Activated CD4-positive, alpha-beta memory T cell treated with anti-CD3 and anti-CD28 coated beads, Interleukin-2, amount 10 ng/mL, durations not matched to agents 7 days and 5 days (primary cell): ENCODE measurements at regions of chr14 and their contacts with region 1.

Region 1: DNA sequence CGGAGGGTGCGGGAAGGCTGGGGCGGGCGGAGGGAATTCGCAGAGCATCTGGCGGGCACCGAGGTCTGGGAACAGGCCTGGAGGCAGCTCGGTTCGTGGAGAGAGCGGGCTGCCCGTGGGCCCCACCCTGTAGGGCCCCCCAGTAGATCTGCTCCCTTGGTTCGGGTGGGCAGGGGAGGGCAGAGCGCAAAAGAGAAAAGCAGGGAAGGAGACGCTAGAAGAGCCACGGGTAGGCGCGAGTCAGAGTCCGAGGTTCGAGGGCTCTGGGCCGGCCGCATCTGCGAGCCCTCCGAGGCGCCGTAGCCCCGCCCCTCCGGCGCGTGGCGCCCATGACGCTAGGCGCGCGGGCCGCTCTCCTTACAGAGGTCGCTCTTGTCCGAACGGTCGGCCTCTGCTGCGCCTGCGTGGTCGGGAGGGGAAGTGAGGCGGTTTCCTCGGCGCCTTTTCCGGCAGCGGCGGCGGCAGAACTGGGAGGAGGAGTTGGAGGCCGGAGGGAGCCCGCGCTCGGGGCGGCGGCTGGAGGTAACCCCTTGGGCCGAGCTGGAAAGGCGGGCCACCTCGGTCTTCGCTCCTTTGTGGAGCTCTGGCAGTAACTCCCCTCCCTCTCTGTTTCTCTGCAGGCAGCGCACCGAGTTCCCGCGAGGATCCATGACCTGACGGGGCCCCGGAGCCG is at the start of gene ARF6:
- DNase-seq: peak; percentile 98
- H3K4me3 Mint-ChIP-seq: peak within 1 kb of the TSS; percentile 96
- H3K27ac Mint-ChIP-seq: peak within 1 kb of the TSS; percentile 100
- H3K4me1 Mint-ChIP-seq: peaks cover 20% of the 10 kb centered on the region
- H3K27me3 Mint-ChIP-seq: no peaks in the 10 kb centered on the region
- total RNA-seq, gene ARF6: 198 to 199 TPM

Region 2: GRCh38 chr14:49620182-49621113 is 272.3 kb before region 1 on chr14 and contains the starts of genes MGAT2 and RPL36AL:
- CTCF ChIA-PET with region 1: no interaction called
- POLR2A ChIA-PET with region 1: interaction called, 10 read pairs
- DNase-seq: peak; percentile 96
- H3K4me3 Mint-ChIP-seq: peak within 1 kb of the TSS; percentile 94
- H3K27ac Mint-ChIP-seq: peak within 1 kb of the TSS; percentile 94
- H3K4me1 Mint-ChIP-seq: peaks cover 50% of the 10 kb centered on the region
- H3K27me3 Mint-ChIP-seq: no peaks in the 10 kb centered on the region
- total RNA-seq, gene MGAT2: 82.7 to 86.5 TPM
- total RNA-seq, gene RPL36AL: 320 to 330 TPM

Region 3: DNA sequence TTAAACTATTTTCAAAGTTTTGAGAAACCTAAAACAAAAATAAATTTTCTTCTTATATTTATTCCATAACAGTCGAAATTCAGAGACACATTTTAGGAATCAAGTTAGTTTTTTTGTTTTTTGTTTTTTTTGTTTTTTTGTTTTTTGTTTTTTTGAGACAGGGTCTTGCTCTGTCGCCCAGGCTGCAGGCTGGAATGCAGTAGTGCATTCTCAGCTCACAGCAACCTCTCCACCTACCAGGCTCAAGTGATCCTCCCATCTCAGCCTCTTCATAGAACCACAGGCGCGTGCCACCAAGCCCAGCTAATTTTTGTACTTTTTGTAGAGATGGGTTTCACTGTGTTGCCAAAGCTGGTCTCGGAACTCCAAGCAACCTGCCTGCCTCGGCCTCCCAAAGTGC is 239.3 kb before region 1 on chr14:
- CTCF ChIA-PET with region 1: no interaction called
- POLR2A ChIA-PET with region 1: no interaction called
- DNase-seq: no peak
- H3K4me3 Mint-ChIP-seq: no peak overlapping the region
- H3K27ac Mint-ChIP-seq: no peak overlapping the region
- H3K4me1 Mint-ChIP-seq: no peaks in the 10 kb centered on the region
- H3K27me3 Mint-ChIP-seq: no peaks in the 10 kb centered on the region

Region 4: DNA sequence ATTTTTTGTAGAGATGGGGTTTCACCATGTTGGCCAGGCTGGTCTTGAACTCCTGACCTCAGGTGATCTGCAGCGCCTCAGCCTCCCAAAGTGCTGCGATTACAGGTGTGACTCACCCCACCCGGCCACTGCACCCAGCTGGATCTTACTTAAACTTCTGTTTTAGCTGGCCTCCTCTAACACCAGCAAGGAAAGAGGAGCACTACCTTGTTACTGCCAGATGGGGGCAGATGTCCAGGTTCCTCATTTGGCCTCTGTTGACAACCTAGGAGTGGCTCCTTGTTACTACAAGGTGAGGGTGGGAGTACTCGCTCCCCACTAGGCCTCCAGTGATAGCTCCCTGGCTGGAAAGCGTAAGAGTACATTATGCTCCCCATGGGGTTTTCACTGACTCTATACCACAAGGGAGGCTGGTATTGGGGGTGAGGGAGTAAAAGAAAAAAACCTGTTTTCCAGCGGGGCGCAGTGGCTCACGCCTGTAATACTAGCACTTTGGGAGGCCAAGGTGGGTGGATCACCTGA is 13.0 kb before region 1 on chr14:
- CTCF ChIA-PET with region 1: interaction called, 30 read pairs
- POLR2A ChIA-PET with region 1: interaction called, 51 read pairs
- DNase-seq: peak; percentile 76
- H3K4me3 Mint-ChIP-seq: no peak overlapping the region
- H3K27ac Mint-ChIP-seq: peak overlapping the region; percentile 50
- H3K4me1 Mint-ChIP-seq: peaks cover 48% of the 10 kb centered on the region
- H3K27me3 Mint-ChIP-seq: no peaks in the 10 kb centered on the region

Region 5: GRCh38 chr14:49940808-49941421 is 48.1 kb after region 1 on chr14:
- CTCF ChIA-PET with region 1: no interaction called
- POLR2A ChIA-PET with region 1: interaction called, 14 read pairs
- DNase-seq: peak; percentile 30
- H3K4me3 Mint-ChIP-seq: no peak overlapping the region
- H3K27ac Mint-ChIP-seq: peak overlapping the region; percentile 63
- H3K4me1 Mint-ChIP-seq: peaks cover 68% of the 10 kb centered on the region
- H3K27me3 Mint-ChIP-seq: no peaks in the 10 kb centered on the region

Region 6: GRCh38 chr14:50038398-50039119 is 145.8 kb after region 1 on chr14:
- CTCF ChIA-PET with region 1: no interaction called
- POLR2A ChIA-PET with region 1: interaction called, 38 read pairs
- DNase-seq: peak; percentile 70
- H3K4me3 Mint-ChIP-seq: peak overlapping the region; percentile 79
- H3K27ac Mint-ChIP-seq: peak overlapping the region; percentile 98
- H3K4me1 Mint-ChIP-seq: peaks cover 83% of the 10 kb centered on the region
- H3K27me3 Mint-ChIP-seq: no peaks in the 10 kb centered on the region

Region 7: DNA sequence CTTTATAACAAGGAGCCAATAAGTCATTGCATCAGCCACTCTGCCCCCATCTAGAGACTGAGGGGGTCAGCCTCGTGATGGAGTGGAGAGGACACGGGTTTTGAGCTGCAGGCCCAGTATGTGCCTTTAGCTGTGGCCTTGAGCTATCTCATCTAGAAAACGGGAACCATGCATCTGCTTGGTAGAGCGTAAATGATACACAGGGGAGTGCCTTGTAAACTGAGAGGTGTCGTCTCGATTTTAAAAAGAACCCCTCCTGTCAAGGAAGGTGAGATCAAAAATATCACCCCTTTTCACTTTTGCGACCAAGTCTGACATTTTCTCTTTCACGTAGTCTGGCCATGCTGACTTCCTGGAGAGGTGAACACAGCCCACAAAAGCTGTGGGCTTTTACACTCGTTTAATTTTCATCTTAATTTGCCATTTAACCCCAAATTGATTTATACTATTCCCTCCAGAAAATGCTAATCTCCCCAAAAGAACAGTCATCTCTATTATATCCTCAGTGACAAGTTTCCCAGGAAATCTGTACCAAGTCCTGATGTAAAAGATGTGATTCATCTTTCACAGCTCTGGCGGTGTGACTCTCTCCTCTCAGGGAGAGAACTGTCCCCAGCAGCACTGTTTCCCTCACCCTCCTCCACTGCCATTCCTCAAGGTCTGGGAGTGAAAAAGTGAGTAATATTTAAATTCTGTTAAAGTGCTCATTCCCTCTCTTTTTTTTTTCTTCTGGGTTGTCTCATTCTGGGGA is 193.0 kb after region 1 on chr14:
- CTCF ChIA-PET with region 1: interaction called, 3 read pairs
- POLR2A ChIA-PET with region 1: interaction called, 13 read pairs
- DNase-seq: no peak
- H3K4me3 Mint-ChIP-seq: peak overlapping the region; percentile 28
- H3K27ac Mint-ChIP-seq: peak overlapping the region; percentile 98
- H3K4me1 Mint-ChIP-seq: peaks cover 86% of the 10 kb centered on the region
- H3K27me3 Mint-ChIP-seq: peaks cover 4% of the 10 kb centered on the region